Activated B cell treated with CpG ODN at 0.5 μM for 24 hours (primary cell): ENCODE measurements at regions of chr2 and their contacts with region 1.

Region 1: DNA sequence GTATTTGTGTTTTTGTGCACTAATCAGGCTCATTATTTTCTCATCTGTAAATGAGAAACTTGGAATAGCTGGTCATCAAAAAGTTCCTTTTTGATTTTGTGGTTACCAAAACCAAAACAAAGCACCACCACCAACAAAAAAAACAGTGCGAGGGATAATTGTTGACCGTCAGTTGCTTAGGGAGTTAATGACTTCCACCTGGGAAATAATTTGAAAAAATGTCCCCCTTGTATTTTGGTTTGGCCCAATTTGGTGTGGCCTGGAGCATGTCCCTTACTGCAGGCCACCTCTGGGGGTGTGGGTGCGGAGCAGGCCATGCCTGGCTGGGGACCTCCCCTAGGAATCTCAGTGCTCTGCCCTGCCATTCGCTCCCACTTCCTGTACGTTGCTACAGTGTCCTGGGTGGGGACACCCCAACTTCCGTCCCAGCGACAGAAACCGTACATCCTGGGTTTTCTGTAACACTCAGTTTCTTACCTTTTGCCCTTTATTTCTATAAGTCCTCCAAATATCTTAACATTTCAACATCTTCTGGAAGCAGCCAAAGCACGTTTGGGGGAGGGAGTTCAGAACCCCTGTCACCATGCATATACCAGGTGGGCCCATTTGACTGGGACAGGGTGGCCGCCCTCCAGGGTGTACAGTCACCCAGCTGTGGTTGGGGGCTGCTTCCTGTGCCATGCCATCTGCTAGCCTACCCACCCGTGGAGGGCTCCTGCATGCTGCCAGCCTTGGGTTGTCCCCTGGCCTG is 31.3 kb downstream of the NCK2 start:
- DNase-seq: peak; percentile 64
- ATAC-seq: peak; percentile 96
- H3K4me3 Mint-ChIP-seq: peak overlapping the region; percentile 57
- H3K27ac Mint-ChIP-seq: peak overlapping the region; percentile 93
- H3K4me1 Mint-ChIP-seq: peaks cover 87% of the 10 kb centered on the region
- H3K27me3 Mint-ChIP-seq: no peaks in the 10 kb centered on the region
- CTCF ChIP-seq: no peak

Region 2: DNA sequence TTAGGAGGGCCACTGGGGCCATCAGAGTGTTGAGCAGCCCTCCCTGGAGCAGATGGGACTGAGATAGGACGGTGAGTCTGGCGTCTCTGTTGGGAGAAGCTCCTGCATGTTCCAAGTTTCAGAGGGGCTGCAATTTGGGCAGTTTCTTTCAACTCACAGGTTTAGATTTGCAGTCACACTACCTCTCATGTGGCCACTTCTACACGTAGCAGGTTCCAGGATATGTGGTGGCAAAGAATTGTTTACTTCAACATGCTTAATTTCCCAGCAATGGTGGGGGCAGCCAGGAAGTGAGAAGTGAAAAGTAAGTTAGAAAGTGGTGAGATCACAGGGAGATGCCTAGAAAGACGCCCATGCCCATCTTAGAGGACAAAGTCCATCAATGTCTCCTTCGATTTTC is 22.0 kb before region 1 on chr2:
- CTCF ChIA-PET with region 1: no interaction called
- POLR2A ChIA-PET with region 1: interaction called, 13 read pairs
- intact Hi-C with region 1: loop called (anchors 1 kb)
- DNase-seq: no peak
- ATAC-seq: peak; percentile 22
- H3K4me3 Mint-ChIP-seq: peak overlapping the region; percentile 52
- H3K27ac Mint-ChIP-seq: peak overlapping the region; percentile 61
- H3K4me1 Mint-ChIP-seq: peaks cover 92% of the 10 kb centered on the region
- H3K27me3 Mint-ChIP-seq: no peaks in the 10 kb centered on the region
- CTCF ChIP-seq: no peak

Region 3: DNA sequence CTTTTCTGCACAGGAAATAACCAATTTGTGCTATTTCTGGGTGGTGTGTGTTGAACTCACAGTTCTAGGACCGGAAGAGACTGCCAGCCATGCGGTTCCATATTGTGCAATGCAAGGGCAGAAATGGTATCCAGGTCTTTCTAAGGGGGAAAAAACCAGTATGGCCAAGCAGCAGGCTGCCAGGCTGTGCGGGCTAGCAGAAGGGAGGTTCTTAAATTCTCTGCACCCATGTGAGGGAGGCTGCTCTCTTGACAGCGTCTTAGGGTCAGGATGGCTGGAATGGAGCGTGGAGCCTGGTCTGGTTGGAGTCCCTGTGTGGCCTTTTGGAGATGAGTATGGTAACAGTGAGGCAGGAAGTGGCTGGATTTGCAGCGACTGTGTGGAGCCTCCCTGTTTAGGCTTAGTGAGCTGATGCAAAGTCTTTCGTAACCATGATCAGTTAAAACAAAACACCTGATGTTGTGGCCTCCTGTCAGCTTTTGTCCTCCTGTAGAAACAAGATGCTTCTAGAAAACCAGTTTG is 21.4 kb after region 1 on chr2:
- CTCF ChIA-PET with region 1: no interaction called
- POLR2A ChIA-PET with region 1: interaction called, 27 read pairs
- intact Hi-C with region 1: loop called (anchors 1 kb)
- DNase-seq: no peak
- ATAC-seq: peak; percentile 29
- H3K4me3 Mint-ChIP-seq: peak overlapping the region; percentile 68
- H3K27ac Mint-ChIP-seq: peak overlapping the region; percentile 90
- H3K4me1 Mint-ChIP-seq: peaks cover 95% of the 10 kb centered on the region
- H3K27me3 Mint-ChIP-seq: no peaks in the 10 kb centered on the region
- CTCF ChIP-seq: no peak

Region 4: DNA sequence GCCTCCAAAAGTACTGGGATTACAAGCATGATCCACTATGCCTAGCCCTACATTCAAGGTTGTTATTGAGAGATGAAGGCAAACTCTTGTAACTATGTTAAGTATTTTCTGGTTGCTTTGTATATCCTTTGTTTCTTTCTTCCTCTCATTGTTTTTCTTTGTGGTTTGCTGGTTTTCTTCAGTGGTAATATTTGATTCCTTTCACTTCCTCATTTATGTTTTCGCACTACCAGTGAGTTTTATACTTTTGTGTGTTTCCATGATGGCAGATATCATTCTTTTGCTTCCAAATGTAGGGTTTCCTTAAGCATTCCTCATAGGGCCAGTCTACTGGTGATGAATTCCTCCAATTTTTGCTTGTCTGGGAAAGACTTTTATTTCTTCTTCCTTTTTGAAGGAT is 58.9 kb after region 1 on chr2:
- CTCF ChIA-PET with region 1: no interaction called
- POLR2A ChIA-PET with region 1: no interaction called
- intact Hi-C with region 1: loop called (anchors 1 kb)
- DNase-seq: no peak
- ATAC-seq: peak; percentile 72
- H3K4me3 Mint-ChIP-seq: peak overlapping the region; percentile 56
- H3K27ac Mint-ChIP-seq: peak overlapping the region; percentile 82
- H3K4me1 Mint-ChIP-seq: peaks cover 75% of the 10 kb centered on the region
- H3K27me3 Mint-ChIP-seq: no peaks in the 10 kb centered on the region
- CTCF ChIP-seq: no peak

Region 5: DNA sequence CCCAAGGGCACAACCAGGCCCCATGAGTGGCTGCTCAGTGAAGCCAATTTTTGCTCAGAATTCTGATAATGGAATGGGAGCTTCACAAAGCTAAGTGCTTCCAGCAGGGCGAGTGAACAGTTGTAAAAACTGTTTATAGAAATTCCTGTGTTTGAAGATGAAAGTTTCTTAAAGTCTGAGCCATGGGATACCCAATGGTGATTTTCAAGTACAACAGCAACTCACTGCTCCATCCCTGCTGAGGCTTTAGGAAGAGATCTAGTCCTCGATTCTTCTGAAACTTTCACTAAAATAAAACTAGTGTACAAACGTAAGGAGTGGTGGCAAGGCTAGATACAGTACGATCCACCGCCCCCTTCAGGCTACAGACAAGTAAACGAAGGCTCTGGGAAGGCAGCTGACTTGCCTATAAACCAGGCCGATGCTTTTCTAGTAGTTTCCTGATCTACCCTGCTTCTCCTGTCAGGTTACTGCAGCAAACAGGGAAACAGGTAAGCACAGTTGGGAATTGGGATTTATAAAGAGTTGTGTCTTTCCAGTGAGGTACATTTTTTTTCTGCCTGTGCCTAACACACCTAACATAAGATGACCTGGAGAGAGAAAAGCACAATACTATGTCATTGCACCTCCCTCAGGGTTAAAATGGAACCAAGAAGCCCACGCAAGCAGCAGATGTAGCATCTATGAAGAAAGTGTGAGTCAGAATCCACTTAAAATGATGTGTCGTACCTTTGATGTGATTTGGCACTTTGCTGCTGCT is 309.4 kb after region 1 on chr2:
- CTCF ChIA-PET with region 1: no interaction called
- POLR2A ChIA-PET with region 1: no interaction called
- intact Hi-C with region 1: loop called (anchors 5 kb)
- DNase-seq: no peak
- ATAC-seq: peak; percentile 31
- H3K4me3 Mint-ChIP-seq: no peak overlapping the region
- H3K27ac Mint-ChIP-seq: no peak overlapping the region
- H3K4me1 Mint-ChIP-seq: peaks cover 20% of the 10 kb centered on the region
- H3K27me3 Mint-ChIP-seq: no peaks in the 10 kb centered on the region
- CTCF ChIP-seq: no peak